Activated CD4-positive, alpha-beta T cell treated with anti-CD3 and anti-CD28 coated beads, Interleukin-2, amount 10 ng/mL, durations not matched to agents 24 days and 14 days (primary cell): ENCODE measurements at regions of chr11 and their contacts with region 1.

Region 1: DNA sequence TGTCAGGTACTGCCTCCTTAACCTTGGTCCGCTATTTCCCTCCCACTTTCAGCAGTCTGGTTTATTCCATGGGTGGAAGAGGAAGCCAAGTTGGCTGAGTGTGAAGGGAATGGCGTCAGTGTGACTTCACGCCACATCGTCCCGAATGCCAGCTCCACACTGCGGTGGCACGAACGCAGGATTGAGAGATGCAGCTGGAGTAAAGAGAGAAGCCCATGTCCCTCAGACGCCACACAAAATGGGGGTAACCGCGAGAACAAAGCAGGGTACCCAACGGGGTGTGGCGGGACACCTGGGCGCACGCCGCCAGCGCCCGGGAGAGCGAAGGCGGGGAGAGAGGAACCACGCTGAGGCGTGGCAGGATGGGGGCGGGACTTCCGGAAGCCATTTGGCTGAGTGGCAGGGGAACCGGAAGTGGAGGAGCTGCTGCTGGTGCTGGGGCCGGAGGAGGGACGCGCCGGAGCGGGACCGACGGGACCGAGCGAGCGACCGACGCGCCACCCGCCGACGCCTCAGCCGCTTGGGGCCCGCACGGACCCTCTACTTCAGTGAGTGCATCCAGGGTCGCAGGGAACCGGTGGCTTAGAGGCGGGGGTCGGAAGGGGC is at the start of gene PAFAH1B2:
- DNase-seq: peak; percentile 99
- H3K4me3 Mint-ChIP-seq: peak within 1 kb of the TSS; percentile 97
- H3K27ac Mint-ChIP-seq: peak within 1 kb of the TSS; percentile 93
- H3K4me1 Mint-ChIP-seq: peaks cover 31% of the 10 kb centered on the region
- H3K27me3 Mint-ChIP-seq: peaks cover 24% of the 10 kb centered on the region
- total RNA-seq, gene PAFAH1B2: 79.8 and 81.0 TPM in 2 replicates

Region 2: GRCh38 chr11:116772443-116773202 is 371.4 kb before region 1 on chr11 and contains the start of gene BUD13:
- intact Hi-C with region 1: loop called (anchors 1 kb)
- DNase-seq: peak; percentile 99
- H3K4me3 Mint-ChIP-seq: peak within 1 kb of the TSS; percentile 91
- H3K27ac Mint-ChIP-seq: peak within 1 kb of the TSS; percentile 95
- H3K4me1 Mint-ChIP-seq: peaks cover 46% of the 10 kb centered on the region
- H3K27me3 Mint-ChIP-seq: no peaks in the 10 kb centered on the region
- total RNA-seq, gene BUD13: 31.5 and 33.2 TPM in 2 replicates

Region 3: GRCh38 chr11:117178210-117179034 is 34.4 kb after region 1 on chr11 and contains the start of gene SIDT2:
- intact Hi-C with region 1: loop called (anchors 1 kb)
- DNase-seq: peak; percentile 97
- H3K4me3 Mint-ChIP-seq: peak within 1 kb of the TSS; percentile 88
- H3K27ac Mint-ChIP-seq: peak within 1 kb of the TSS; percentile 86
- H3K4me1 Mint-ChIP-seq: peaks cover 26% of the 10 kb centered on the region
- H3K27me3 Mint-ChIP-seq: no peaks in the 10 kb centered on the region
- total RNA-seq, gene SIDT2: 23.9 and 29.1 TPM in 2 replicates

Region 4: DNA sequence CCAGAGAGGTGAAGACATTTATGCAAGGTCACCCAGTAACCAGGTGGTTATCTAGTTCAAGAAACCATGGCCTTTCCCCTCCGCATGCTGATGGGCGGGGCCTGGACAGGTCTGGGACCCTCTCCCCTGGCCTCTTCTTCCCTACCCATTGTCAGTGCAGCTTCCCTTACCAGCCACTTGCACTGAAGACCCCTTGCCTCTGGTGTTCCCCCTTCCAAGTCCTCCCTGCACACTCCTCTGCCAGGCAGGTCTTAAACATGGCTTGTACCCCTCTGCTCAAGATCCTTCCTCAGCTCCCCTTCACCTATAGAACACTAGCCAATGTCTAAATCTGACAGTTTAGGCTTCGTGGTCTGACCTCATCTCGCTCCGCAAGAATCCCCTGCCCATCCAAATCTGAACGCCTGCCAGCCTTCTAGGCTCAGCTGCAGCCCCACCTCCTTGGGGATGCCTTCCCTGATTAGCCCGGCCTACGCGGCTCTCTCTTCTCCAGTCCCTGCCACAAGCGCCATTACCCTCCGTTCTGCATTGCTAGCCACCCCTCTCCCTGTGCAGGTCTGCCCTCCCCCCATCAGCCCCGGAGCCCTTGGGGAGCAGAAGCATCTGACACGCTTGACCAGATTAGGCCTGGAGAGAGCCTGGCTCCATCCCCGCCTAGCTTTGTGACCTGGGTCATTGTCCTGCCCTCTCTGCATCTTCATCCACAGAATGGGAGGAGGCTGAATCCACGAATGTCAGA is 439.3 kb after region 1 on chr11:
- intact Hi-C with region 1: no loop called
- DNase-seq: no peak
- H3K4me3 Mint-ChIP-seq: no peak overlapping the region
- H3K27ac Mint-ChIP-seq: no peak overlapping the region
- H3K4me1 Mint-ChIP-seq: no peaks in the 10 kb centered on the region
- H3K27me3 Mint-ChIP-seq: peaks cover 4% of the 10 kb centered on the region